ENCODE measurements at regions of chr14 and their contacts with region 1.

Region 1: GRCh38 chr14:37874429-37875191 is 279.2 kb downstream of the TTC6 start:
- DNase-seq: peak; percentile 77 to 91 (median 82)
- ATAC-seq: peak; percentile 100
- H3K4me3 ChIP-seq: no peak overlapping the region
- H3K27ac ChIP-seq: no peak overlapping the region
- H3K4me1 ChIP-seq: peaks cover 0 to 3% of the 10 kb centered on the region in 2 donors
- H3K27me3 ChIP-seq: no peaks in the 10 kb centered on the region
- CTCF ChIP-seq: peak; percentile 69 to 90

Region 2: GRCh38 chr14:37246427-37246914 is 628.1 kb before region 1 on chr14:
- intact Hi-C with region 1: loop called in 1 of 2 experiments (anchors 10 kb)
- DNase-seq: peak in 2 of 4 donors; percentile 43 to 46
- ATAC-seq: peak; percentile 84
- H3K4me3 ChIP-seq: no peak overlapping the region
- H3K27ac ChIP-seq: no peak overlapping the region
- H3K4me1 ChIP-seq: no peaks in the 10 kb centered on the region
- H3K27me3 ChIP-seq: no peaks in the 10 kb centered on the region
- CTCF ChIP-seq: peak; percentile 55 to 59

Region 3: GRCh38 chr14:37709419-37710195 is 165.0 kb before region 1 on chr14:
- intact Hi-C with region 1: loop called in 1 of 2 experiments (anchors 10 kb)
- DNase-seq: peak in 2 of 4 donors; percentile 17 to 33
- ATAC-seq: no peak
- H3K4me3 ChIP-seq: no peak overlapping the region
- H3K27ac ChIP-seq: no peak overlapping the region
- H3K4me1 ChIP-seq: no peaks in the 10 kb centered on the region
- H3K27me3 ChIP-seq: no peaks in the 10 kb centered on the region
- CTCF ChIP-seq: peak in 1 of 2 donors; percentile 26

Measured in left lung (tissue), 14 donors.